Posterior vena cava (tissue), 2 donors: ENCODE measurements at regions of chr19 and their contacts with region 1.

Region 1: DNA sequence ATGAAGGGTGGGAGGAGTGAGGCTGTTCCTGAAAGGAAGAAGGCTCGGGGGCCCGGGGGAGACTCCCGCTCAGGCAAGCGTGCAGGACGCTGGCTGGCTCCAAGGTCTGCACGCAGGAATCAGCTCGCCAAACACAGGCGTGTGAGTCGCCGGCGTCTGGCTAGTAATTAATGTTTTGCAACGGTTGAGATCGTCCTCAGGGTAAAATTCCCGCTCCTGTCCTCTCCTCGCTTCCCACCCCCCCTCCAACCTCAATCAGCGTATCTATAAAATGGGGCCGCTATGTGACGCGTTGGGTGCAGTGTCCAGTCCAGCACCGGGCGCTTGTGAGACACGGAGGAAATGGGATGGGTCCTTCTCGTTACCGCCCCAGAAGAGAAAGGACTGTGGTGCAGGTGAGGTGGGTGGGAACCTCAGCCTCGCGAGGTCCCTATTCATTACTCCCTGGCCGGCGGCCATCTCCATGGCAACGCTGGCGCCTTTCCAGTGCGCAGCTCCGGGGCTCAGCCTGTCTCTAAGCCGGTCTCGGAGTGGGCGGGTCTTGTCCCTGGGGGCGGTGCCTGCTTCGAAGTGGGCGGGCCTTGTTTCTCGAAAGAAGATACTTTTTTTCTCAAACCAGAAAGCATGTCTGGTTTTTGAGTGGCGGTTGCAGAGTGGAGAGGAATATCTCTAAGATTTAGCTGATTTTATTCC is 6.5 kb upstream of the ZNF579 start:
- DNase-seq: peak; percentile 97

Region 2: DNA sequence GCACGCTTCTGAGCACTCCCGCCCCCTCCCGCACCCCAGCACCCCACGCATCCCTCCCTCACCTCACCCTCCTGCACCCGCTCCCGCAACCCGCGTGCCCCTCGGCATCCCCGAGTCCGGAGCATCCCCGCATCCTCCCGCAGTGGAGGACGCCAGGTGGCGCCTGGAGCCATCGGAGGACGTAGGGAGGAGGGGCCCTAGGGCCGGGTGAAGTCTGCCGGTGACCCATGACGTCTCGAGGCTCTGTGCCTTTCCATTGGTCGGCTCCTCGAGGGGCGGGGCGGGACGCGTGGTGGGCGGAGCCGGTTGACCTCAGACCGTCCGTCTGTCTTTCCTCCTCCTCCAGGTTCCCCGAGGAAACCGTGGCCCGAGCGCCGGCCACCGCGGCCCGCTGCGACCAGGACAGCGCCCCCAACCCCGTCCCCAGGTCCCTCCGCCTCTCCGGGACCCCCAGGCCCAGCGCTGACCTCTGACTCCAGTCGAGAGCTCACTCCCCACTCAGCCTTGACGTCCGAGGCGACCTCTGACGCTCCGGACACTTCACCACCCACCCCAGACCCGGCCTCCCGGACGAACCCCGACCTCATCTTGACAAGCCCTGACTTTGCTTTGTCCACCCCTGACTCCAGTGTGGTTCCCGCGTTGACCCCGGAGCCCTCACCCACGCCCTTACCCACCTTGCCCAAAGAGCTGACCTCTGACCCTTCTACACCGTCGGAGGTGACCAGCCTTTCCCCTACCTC is 70.1 kb before region 1 on chr19:
- intact Hi-C with region 1: loop called in 1 of 2 experiments (anchors 5 kb)
- DNase-seq: peak; percentile 98

Region 3: DNA sequence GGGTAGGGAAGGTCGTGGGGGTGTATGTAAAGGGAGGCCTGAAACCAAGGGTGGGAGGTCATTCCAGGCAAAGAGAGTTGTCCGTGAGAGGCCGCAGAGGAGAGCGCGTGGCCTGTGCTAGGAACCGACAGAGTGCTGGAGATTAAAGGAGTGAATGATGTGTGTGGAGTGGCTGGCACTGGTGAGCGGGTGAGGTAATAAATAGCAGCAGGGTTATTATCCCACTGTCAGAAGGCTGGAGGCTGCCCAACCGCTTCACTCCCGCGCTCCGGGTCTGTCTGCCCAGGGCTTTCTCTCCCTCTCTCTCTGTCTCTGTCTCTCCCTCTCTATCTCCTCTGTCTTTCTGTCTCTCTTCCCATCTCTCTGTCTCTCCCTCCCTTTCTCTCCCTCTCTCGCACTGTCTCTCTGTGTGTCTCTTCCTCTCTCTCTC is 23.8 kb before region 1 on chr19:
- intact Hi-C with region 1: loop called in 1 of 2 experiments (anchors 1 kb)
- DNase-seq: no peak